Left ventricle myocardium superior (tissue), 1 donor: ENCODE measurements at regions of chr11 and their contacts with region 1.

Region 1: GRCh38 chr11:9613118-9613829 is 39.8 kb downstream of the WEE1 start:
- DNase-seq: peak; percentile 95
- ATAC-seq: peak; percentile 91

Region 2: GRCh38 chr11:9748361-9748970 is 135.2 kb after region 1 on chr11:
- intact Hi-C with region 1: loop called (anchors 5 kb)
- DNase-seq: peak; percentile 51
- ATAC-seq: peak; percentile 86